RWPE1 (cell line): ENCODE measurements at regions of chr19 and their contacts with region 1.

Region 1: DNA sequence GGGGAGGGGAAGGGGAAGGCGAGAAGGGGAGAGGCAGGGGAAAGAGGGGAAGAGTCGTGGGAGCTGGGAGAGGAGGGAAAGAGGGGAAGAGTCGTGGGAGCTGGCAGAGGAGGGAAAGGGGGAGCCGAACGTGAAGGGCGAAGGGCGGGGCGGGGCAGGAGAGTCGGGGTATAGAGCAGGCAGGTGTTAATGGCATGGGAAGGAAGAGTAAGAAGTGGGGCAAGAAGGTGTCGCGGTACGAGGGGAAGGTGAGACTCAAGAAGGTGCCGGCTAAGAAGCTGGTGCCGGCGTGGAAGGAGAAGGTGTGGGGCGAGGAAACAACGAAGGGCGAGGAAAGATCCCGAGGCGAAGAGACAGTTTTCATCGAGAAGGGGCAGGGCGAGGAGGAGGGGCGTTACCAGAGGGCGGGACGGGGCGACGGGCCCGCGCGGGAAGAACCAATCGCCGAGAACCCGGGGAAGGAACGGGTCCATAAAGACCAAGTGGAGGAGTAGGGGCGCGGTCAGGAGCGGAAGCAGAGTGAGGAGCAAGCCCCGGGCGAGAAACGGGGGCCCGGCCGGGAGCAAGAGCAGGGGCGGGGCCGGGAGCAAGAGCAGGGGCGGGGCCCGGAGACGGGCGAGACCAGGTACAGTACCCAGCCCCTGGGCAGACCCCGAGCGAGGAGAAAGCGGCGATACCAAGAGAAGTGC is 463 bp downstream of the CATSPERG start:
- DNase-seq: peak; percentile 96
- H3K27ac ChIP-seq: peak overlapping the region; percentile 94
- CTCF ChIP-seq: no peak

Region 2: DNA sequence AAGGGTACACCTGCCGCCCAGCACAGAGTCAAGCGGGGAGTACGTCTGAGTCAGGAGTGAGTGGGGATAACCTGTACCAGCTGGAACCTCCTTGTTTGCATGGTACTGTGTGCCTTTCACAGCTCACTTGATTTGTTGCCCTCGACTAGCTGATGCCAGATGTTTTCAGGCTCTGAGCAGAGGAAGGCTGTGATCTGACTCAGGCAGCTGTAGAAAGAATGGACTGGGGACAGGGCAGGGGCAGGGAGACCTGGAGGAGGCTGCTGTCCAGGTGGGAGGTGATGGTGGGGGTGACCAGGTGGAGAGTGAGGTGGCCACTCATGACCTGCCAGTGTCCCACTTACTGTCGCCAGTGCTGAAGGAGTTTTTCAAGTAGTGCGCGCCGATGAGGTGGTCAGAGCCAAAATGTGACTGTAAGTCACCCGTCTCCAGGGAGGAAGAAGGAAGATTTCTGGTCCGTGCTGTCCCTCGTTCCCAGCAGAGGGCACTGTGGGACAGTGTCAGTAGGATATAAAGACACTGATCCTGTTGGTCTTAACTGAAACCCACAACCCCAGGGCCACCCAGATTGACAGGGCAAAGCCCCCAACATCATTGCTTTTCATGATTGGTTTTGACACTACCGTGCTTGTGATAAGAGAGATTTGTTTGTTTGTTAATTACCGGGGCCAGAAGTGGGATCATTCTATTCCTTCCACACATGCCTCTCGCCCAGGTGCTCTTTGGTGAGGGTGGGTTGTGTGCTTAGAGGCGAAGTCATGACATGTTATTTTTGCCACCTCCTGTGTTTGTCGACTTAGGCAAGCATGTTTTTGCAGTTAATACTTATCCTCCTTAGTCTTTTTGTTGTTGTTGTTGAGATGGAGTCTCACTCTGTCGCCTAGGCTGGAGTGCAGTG is 240.4 kb before region 1 on chr19:
- CTCF ChIA-PET with region 1: no interaction called
- POLR2A ChIA-PET with region 1: no interaction called
- DNase-seq: peak; percentile 54
- H3K27ac ChIP-seq: peak overlapping the region; percentile 52
- CTCF ChIP-seq: peak; percentile 76

Region 3: DNA sequence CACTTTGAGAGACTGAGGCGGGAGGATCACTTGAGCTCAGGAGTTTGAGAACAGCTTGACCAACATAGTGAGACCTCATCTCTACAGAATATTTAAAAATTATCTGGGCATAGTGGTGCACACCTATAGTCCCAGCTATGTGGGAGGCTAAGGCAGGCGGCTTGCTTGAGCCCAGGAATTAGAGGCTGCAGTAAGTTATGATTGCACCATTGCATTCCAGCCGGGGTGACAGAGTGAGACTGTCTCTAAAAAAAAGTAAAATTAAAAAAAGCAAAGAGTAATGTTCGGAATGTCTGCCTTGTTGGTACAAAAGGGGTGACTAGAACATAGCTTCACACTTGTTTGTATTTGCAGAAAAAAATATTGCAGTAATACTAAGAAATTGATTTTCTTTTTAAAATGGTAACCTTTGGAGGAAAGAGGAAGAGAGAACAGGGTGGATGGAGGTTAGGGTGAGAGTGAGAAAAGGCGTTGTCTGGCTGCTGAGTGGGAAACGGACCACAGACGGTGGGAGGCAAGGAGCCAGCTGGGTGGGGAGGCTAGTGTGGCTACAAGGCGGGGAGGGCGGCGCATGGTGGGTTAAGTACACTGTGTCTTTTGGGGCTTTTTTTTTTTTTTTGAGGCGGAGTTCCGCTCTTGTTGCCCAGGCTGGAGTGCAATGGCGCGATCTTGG is 90.1 kb before region 1 on chr19:
- CTCF ChIA-PET with region 1: interaction called, 17 read pairs
- POLR2A ChIA-PET with region 1: interaction called, 4 read pairs
- DNase-seq: no peak
- H3K27ac ChIP-seq: peak overlapping the region; percentile 46
- CTCF ChIP-seq: no peak

Region 4: GRCh38 chr19:38315657-38316476 is 20.2 kb before region 1 on chr19 and contains the start of gene YIF1B:
- CTCF ChIA-PET with region 1: no interaction called
- POLR2A ChIA-PET with region 1: no interaction called
- DNase-seq: peak; percentile 98
- H3K27ac ChIP-seq: peak within 1 kb of the TSS; percentile 91
- CTCF ChIP-seq: no peak